WTC11 (cell line): ENCODE measurements at regions of chr1 and their contacts with region 1.

Region 1: DNA sequence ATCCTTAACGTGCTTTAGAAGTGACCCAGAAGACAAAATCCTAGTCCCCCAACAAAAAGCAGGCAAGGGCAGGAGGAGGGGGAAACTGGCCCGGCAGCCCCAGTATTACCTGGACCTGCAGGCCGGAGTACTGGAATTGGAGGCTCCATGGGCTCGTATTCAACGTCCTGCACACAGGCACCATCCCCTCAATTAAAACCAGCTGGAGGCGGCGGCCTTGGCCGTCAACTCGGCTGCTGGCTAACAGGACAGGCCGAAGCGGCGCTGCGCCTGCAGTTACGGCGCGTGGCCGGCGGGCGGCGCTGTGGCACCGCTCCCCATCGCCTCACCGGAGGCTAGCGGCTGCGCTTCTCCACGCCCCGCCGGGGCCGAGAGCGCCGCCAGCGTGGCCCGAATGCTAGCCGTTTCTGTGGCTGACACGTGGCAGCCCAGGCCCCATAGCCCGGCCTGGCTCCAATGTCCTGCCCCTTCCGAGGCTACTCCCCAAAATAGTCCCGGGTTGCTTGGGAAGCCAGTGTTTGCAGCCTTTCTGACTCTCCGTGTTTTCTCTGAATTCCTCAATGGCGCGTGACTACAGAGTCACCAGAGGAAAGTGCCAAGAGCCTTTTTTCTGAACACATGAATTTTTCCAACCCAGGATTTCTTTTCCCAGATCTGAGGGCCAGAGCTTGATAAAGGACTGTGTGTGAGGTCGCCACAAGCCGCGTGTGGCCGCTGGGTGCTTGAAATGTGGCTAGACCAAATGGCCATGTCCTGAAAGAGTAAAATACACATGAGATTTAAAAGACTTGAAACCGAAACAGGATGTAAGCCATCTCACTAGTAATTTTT is 82.5 kb downstream of the HHIPL2 start:
- DNase-seq: peak; percentile 93
- ATAC-seq: peak; percentile 98
- H3K4me3 Mint-ChIP-seq: peak overlapping the region; percentile 89
- H3K27ac Mint-ChIP-seq: peak overlapping the region; percentile 98
- H3K4me1 Mint-ChIP-seq: peaks cover 3% of the 10 kb centered on the region
- H3K27me3 Mint-ChIP-seq: no peaks in the 10 kb centered on the region
- CTCF ChIP-seq: peak; percentile 99

Region 2: DNA sequence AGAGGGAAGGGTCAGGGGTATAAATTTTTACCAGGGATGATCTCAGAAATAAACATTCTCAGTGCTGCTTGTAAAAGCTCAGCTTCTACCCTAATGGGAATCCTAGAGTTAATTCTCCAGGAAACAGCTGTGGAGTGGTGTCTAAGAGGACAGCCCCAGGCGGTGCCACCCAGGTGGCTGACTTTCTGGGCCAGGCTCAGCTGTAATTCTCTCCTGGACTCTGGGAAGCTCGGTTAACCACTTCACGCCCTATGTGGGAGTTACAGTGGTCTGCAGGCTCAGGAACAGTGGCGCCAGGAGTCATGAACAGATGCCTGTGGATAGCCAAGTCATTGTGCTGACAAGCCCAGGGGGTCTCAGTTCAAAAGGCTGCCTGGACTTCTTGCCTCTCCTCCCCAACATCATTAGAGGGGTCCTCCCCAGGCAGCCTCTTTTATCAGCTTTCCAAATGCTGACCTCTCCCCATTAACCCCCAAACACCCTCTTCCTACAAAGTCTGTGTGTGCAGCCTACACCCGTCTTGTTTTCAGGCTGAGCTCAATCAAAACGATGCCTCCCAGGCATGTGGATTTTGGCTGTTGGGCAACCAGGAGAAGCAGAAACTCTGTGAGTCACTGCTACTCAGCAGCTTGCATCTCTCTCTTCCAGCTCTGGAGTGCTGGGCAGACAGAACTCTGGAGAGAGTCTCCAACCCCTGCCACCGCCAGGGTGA is 81.3 kb after region 1 on chr1:
- CTCF ChIA-PET with region 1: interaction called, 12 read pairs
- POLR2A ChIA-PET with region 1: no interaction called
- DNase-seq: no peak
- ATAC-seq: 0 out of 2 replicates have a peak, but pooled peaks have one; percentile 13
- H3K4me3 Mint-ChIP-seq: no peak overlapping the region
- H3K27ac Mint-ChIP-seq: no peak overlapping the region
- H3K4me1 Mint-ChIP-seq: 0 out of 2 replicates have a peak, but pooled peaks cover 6% of the 10 kb centered on the region
- H3K27me3 Mint-ChIP-seq: no peaks in the 10 kb centered on the region
- CTCF ChIP-seq: no peak

Region 3: DNA sequence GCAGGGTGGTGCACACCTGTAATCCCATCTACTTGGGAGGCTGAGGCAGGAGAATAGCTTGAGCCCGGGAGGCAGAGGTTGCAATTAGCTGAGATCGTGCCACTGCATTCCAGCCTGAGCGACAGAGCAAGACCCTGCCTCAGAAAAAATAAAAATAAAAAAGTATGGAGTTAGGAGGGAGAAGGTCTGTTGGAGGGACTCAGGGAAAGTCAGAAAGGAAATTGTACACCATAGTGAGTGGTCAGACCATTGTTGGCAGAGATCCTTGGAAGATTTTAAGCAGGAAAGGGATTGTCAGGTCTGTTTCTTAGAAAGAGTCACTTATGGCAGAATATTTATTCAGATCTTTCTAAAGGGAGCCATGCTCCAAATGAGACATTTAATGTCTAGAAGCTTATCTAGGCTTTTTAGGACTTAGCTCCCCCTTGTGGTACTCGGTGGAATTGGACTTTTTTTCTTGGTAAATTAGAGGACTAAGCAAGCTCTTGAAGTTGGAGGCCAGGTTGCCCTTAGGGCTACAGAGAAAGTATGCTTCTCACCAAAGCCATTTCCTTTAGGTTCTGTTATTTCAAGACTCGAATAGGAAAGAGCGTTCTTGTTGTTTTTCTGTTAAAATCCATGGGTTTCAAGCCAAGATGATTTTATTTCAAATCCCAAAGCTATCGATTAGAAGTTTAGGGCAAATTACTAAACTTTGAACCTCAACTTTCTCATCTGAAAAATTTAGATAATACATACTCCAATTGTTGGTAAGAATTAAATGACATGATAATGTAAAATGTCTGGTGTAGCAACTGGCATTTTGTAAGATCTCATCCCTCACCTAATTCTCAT is 169.0 kb after region 1 on chr1:
- CTCF ChIA-PET with region 1: interaction called, 40 read pairs
- POLR2A ChIA-PET with region 1: no interaction called
- DNase-seq: peak; percentile 32
- ATAC-seq: peak; percentile 65
- H3K4me3 Mint-ChIP-seq: no peak overlapping the region
- H3K27ac Mint-ChIP-seq: no peak overlapping the region
- H3K4me1 Mint-ChIP-seq: no peaks in the 10 kb centered on the region
- H3K27me3 Mint-ChIP-seq: no peaks in the 10 kb centered on the region
- CTCF ChIP-seq: peak; percentile 76